Caco-2 (cell line): ENCODE measurements at regions of chr20 and their contacts with region 1.

Region 1: GRCh38 chr20:32227744-32228688 is 20.3 kb downstream of the POFUT1 start:
- DNase-seq: peak; percentile 100
- H3K4me3 ChIP-seq: no peak overlapping the region
- H3K4me3 Mint-ChIP-seq: peak overlapping the region; percentile 59
- H3K27ac Mint-ChIP-seq: peak overlapping the region; percentile 99
- H3K4me1 ChIP-seq: peaks cover 57% of the 10 kb centered on the region
- H3K4me1 Mint-ChIP-seq: peaks cover 71% of the 10 kb centered on the region
- H3K27me3 ChIP-seq: no peaks in the 10 kb centered on the region
- H3K27me3 Mint-ChIP-seq: no peaks in the 10 kb centered on the region
- CTCF ChIP-seq: no peak

Region 2: GRCh38 chr20:32010101-32010500 is 217.9 kb before region 1 on chr20 and contains the start of gene CCM2L:
- CTCF ChIA-PET with region 1: no interaction called
- POLR2A ChIA-PET with region 1: no interaction called
- intact Hi-C with region 1: no loop called
- DNase-seq: no peak
- H3K4me3 ChIP-seq: no peak within 1 kb of the TSS
- H3K4me3 Mint-ChIP-seq: no peak within 1 kb of the TSS
- H3K27ac Mint-ChIP-seq: no peak within 1 kb of the TSS
- H3K4me1 ChIP-seq: no peaks in the 10 kb centered on the region
- H3K4me1 Mint-ChIP-seq: peaks cover 7% of the 10 kb centered on the region
- H3K27me3 ChIP-seq: peaks cover 4% of the 10 kb centered on the region; the same call in 1 of the 2 replicates
- H3K27me3 Mint-ChIP-seq: peaks cover 19% of the 10 kb centered on the region
- CTCF ChIP-seq: no peak
- total RNA-seq, gene CCM2L: 0.16 and 0.32 TPM in 2 replicates

Region 3: DNA sequence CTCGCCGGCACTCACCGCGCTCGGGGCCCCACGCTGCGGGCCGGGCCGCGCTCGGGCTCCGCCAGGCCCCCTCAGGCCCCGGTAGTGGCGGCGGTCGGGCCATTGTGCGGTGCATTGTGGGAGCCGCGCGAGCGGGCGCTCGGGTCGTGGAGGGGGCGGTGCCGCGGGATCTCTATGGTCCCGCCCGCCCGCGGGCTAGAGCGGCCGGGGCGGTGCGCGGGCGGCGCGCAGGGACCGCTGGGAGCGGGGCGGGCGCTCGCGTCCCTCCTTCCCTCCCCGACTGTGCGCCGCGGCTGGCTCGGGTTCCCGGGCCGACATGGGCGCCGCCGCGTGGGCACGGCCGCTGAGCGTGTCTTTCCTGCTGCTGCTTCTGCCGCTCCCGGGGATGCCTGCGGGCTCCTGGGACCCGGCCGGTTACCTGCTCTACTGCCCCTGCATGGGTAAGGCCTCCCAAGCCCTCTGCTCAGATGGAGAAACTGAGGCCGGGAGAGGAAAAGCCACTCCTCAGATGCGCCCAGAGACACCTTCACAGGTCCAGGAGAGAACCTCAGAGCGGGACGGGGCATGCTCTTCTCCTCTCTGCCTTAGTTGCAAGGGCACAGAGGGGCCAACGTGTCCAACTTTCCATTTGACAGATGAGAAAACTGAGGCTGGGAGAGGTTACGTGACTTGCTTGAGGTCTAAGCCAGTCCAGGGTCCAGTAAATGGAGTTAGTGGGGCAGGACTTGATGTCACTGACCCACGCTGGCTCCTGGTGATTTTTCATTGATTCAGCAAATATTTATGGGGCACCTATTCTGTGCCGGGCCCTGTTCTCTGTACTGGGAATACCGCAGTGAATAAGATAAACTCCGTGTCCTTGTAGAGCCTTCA is 20.2 kb before region 1 on chr20 and contains the starts of genes PLAGL2 and POFUT1:
- CTCF ChIA-PET with region 1: no interaction called
- POLR2A ChIA-PET with region 1: interaction called, 13 read pairs
- intact Hi-C with region 1: loop called (anchors 1 kb)
- DNase-seq: peak; percentile 95 to 100
- H3K4me3 ChIP-seq: peak within 1 kb of the TSS; percentile 72
- H3K4me3 Mint-ChIP-seq: peak within 1 kb of the TSS; percentile 92
- H3K27ac Mint-ChIP-seq: peak within 1 kb of the TSS; percentile 89
- H3K4me1 ChIP-seq: peaks cover 46% of the 10 kb centered on the region
- H3K4me1 Mint-ChIP-seq: peaks cover 71% of the 10 kb centered on the region
- H3K27me3 ChIP-seq: no peaks in the 10 kb centered on the region
- H3K27me3 Mint-ChIP-seq: no peaks in the 10 kb centered on the region
- CTCF ChIP-seq: peak; percentile 9 to 55
- total RNA-seq, gene PLAGL2: 89.6 and 96.1 TPM in 2 replicates
- total RNA-seq, gene POFUT1: 148 and 158 TPM in 2 replicates

Region 4: DNA sequence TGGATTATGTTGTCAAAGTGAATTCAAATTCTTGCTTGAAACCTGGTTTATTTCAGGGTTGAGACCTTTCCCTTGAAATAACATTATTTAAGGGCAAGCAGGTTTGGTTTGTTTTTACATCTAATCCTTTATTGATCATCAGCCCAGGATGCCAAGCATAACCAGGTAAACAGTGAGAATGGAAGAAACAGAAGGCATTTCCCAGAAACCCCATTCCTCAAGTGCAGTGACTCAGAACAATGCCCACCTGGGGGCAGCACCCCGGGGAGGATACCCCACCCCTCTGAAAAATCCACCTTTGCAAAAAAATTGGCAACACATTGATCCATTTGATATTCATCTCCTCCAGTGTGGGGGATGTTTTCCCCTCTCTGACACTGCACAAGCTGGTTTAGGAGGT is 12.2 kb after region 1 on chr20:
- CTCF ChIA-PET with region 1: no interaction called
- POLR2A ChIA-PET with region 1: interaction called, 10 read pairs
- intact Hi-C with region 1: loop called (anchors 1 kb)
- DNase-seq: peak in 1 of 2 experiments; percentile 68
- H3K4me3 ChIP-seq: no peak overlapping the region
- H3K4me3 Mint-ChIP-seq: no peak overlapping the region
- H3K27ac Mint-ChIP-seq: no peak overlapping the region
- H3K4me1 ChIP-seq: peaks cover 32% of the 10 kb centered on the region
- H3K4me1 Mint-ChIP-seq: peaks cover 31% of the 10 kb centered on the region
- H3K27me3 ChIP-seq: no peaks in the 10 kb centered on the region
- H3K27me3 Mint-ChIP-seq: no peaks in the 10 kb centered on the region
- CTCF ChIP-seq: peak; percentile 53 to 76

Region 5: DNA sequence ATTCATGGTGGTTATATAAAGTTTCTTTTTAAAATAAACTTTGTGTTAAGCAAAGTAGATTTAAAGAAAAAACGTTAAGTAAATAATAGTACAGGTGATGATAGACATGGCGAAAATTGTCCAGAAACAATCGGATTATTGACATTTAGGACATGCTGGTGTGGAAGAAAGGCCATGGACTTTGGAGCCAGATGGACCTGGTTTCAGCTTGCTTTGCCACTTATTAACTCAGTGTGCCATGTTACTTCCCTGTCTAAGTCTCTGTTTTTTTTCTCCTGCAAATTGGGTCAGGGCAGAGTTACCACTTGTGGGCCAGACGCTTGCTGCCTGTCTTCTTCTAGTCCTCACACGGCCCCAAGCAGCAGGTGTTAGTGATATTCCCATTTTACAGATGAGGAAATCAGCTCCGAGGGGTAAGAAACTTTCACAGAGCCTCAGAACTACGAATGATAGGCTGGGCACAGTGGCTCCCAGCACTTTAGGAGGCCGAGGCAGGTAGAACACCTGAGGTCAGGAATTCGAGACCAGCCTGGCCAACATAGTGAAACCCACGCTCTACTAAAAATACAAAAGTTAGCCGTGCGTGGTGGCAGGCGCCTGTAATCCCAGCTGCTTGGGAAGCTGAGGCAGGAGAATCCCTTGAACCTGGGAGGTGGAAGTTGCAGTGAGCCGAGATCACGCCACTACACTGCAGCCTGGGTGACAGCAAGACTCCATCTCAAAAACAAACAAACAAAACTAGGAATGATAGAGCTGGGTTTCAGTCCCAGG is 61.8 kb after region 1 on chr20:
- CTCF ChIA-PET with region 1: no interaction called
- POLR2A ChIA-PET with region 1: interaction called, 5 read pairs
- intact Hi-C with region 1: loop called (anchors 1 kb)
- DNase-seq: peak; percentile 90 to 94
- H3K4me3 ChIP-seq: no peak overlapping the region
- H3K4me3 Mint-ChIP-seq: peak overlapping the region; percentile 54
- H3K27ac Mint-ChIP-seq: peak overlapping the region; percentile 81
- H3K4me1 ChIP-seq: peaks cover 52% of the 10 kb centered on the region
- H3K4me1 Mint-ChIP-seq: peaks cover 36% of the 10 kb centered on the region
- H3K27me3 ChIP-seq: no peaks in the 10 kb centered on the region
- H3K27me3 Mint-ChIP-seq: no peaks in the 10 kb centered on the region
- CTCF ChIP-seq: no peak

Region 6: GRCh38 chr20:32325706-32326503 is 97.9 kb after region 1 on chr20:
- CTCF ChIA-PET with region 1: interaction called, 3 read pairs
- POLR2A ChIA-PET with region 1: interaction called, 4 read pairs
- intact Hi-C with region 1: loop called (anchors 1 kb)
- DNase-seq: peak; percentile 79 to 85
- H3K4me3 ChIP-seq: no peak overlapping the region
- H3K4me3 Mint-ChIP-seq: peak overlapping the region; percentile 41
- H3K27ac Mint-ChIP-seq: peak overlapping the region; percentile 78
- H3K4me1 ChIP-seq: peaks cover 45% of the 10 kb centered on the region
- H3K4me1 Mint-ChIP-seq: peaks cover 21% of the 10 kb centered on the region
- H3K27me3 ChIP-seq: no peaks in the 10 kb centered on the region
- H3K27me3 Mint-ChIP-seq: no peaks in the 10 kb centered on the region
- CTCF ChIP-seq: no peak